Heart left ventricle (tissue), 16 donors: ENCODE measurements at regions of chr19 and their contacts with region 1.

Region 1: DNA sequence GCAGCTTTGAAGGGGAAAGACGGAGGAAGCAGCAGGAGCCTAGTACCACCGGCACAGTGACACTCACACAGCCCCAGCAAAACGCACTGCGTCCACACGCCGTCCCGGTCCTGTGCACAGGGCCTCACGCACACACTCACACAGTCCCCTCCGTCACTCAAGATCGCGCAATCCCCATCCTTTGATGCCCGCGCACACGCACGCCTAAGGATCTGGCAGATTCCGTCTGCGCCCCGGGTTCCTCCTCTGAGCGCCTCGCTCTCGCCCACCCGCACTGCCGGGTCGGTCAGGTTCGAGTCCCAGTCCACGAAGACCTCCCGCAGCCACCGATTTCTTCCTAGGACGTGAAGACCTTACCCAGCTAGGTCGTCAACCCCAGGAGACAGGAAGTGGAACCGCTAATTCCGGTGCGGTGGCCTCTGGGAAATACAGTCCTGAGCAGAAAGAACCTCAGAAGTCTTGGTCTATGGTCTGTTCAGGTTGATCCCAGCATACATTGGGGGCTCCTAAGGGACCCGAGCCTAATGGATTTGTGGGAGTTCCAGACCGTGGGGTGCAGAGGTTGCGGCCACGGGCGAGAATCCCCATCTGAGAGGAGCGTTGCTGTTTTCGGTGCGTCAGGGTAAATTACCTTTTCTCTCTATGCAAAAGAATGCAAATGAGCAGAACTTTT is at the start of gene ZNF780B:
- DNase-seq: peak; percentile 56 to 80 (median 69)
- ATAC-seq: peak; percentile 95 to 98 (median 98)
- H3K4me3 ChIP-seq: peak within 1 kb of the TSS; percentile 47 to 91 (median 74)
- H3K27ac ChIP-seq: peak within 1 kb of the TSS; percentile 58 to 83 (median 78)
- H3K4me1 ChIP-seq: peaks cover 0 to 28% (median 8%) of the 10 kb centered on the region in 12 donors
- H3K27me3 ChIP-seq: no peaks in the 10 kb centered on the region
- CTCF ChIP-seq: no peak
- POLR2A ChIP-seq: no peak
- total RNA-seq, gene ZNF780B: 6.4 to 35.2 (median 19.7) TPM

Region 2: GRCh38 chr19:39996811-39997594 is 59.0 kb before region 1 on chr19 and contains the start of gene ZNF546:
- intact Hi-C with region 1: loop called in 3 of 10 experiments (anchors 5 to 10 kb)
- DNase-seq: peak; percentile 93 to 96 (median 94)
- ATAC-seq: peak; percentile 97 to 99 (median 98)
- H3K4me3 ChIP-seq: peak within 1 kb of the TSS; percentile 49 to 84 (median 74)
- H3K27ac ChIP-seq: peak within 1 kb of the TSS; percentile 73 to 96 (median 89)
- H3K4me1 ChIP-seq: peaks cover 0 to 22% (median 15%) of the 10 kb centered on the region in 12 donors
- H3K27me3 ChIP-seq: no peaks in the 10 kb centered on the region
- CTCF ChIP-seq: no peak
- POLR2A ChIP-seq: peak; percentile 67 to 94
- total RNA-seq, gene ZNF546: 4.2 to 14.4 (median 9.2) TPM

Region 3: GRCh38 chr19:40006273-40006691 is 49.7 kb before region 1 on chr19:
- intact Hi-C with region 1: loop called in 2 of 10 experiments (anchors 10 kb)
- DNase-seq: no peak
- ATAC-seq: peak in 3 of 4 donors; percentile 34 to 70 (median 61)
- H3K4me3 ChIP-seq: no peak overlapping the region
- H3K27ac ChIP-seq: peak overlapping the region in 11 of 12 donors; percentile 15 to 82 (median 53)
- H3K4me1 ChIP-seq: peaks cover 0 to 17% (median 8%) of the 10 kb centered on the region in 12 donors
- H3K27me3 ChIP-seq: no peaks in the 10 kb centered on the region
- CTCF ChIP-seq: no peak
- POLR2A ChIP-seq: no peak

Region 4: DNA sequence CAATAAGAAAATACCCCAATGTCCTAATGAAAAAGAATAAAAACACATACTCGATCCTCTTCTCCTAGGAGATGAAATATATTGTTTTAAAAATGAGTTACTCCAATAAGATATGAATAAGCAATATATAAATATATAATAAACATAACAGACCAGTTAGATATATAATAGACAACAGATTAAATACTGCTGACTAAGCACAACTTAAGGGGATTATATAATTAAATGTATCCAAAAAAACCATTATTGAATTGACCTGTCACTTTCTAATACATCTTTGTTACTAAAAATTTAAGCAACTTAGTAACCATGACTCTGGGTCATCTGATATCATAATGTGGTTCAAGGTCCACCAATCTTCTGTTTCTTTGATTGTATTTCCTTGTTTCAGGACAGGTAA is 14.1 kb after region 1 on chr19:
- intact Hi-C with region 1: no loop called
- DNase-seq: no peak
- ATAC-seq: no peak
- H3K4me3 ChIP-seq: no peak overlapping the region
- H3K27ac ChIP-seq: no peak overlapping the region
- H3K4me1 ChIP-seq: no peaks in the 10 kb centered on the region
- H3K27me3 ChIP-seq: no peaks in the 10 kb centered on the region
- CTCF ChIP-seq: no peak
- POLR2A ChIP-seq: no peak